ENCODE measurements at regions of chr12 and their contacts with region 1.

Region 1: DNA sequence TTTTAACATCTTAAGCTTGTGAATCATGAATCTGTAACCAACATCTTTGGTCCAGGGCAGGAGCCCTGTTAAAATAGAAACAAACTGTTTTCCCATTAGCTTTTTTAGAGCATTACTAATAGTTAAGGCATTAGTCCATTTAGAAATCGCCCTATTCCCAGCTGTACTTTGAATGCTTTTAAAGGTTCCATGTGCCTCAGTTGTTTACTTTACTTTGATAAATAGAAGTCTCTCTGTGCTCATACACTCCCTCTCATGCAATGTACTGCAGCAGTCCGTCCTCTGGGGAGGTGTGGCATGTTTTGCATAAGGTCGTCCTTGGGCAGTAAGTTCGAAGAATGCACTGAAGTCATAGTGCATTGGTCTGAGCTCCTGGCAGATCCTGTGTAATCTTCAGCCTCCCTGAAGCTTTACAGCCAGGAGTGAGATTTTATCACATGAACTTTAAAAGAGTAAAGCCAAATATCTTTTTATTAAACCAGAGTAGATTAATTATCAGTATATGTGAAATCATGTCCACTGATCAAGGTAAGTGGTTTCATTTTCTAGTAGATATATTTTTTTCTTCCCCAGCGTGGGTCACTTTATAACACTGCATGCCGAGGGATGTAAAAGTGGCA is 134.7 kb downstream of the FGD4 start:
- DNase-seq: peak; percentile 89
- H3K4me3 ChIP-seq: peak overlapping the region; percentile 39 to 73 (median 67)
- H3K27ac ChIP-seq: peak overlapping the region; percentile 67
- H3K4me1 ChIP-seq: peaks cover 30% of the 10 kb centered on the region
- H3K27me3 ChIP-seq: no peaks in the 10 kb centered on the region
- CTCF ChIP-seq: no peak
- POLR2A ChIP-seq: peak; percentile 75

Region 2: GRCh38 chr12:32482226-32482625 is 51.9 kb before region 1 on chr12:
- CTCF ChIA-PET with region 1: interaction called, 6 read pairs
- POLR2A ChIA-PET with region 1: no interaction called
- dilution Hi-C with region 1: loop called (anchors 10 kb)
- intact Hi-C with region 1: loop called (anchors 2 kb)
- DNase-seq: peak; percentile 71
- H3K4me3 ChIP-seq: no peak overlapping the region
- H3K27ac ChIP-seq: peak overlapping the region; percentile 47
- H3K4me1 ChIP-seq: peaks cover 53% of the 10 kb centered on the region
- H3K27me3 ChIP-seq: no peaks in the 10 kb centered on the region
- CTCF ChIP-seq: no peak
- POLR2A ChIP-seq: no peak

Region 3: DNA sequence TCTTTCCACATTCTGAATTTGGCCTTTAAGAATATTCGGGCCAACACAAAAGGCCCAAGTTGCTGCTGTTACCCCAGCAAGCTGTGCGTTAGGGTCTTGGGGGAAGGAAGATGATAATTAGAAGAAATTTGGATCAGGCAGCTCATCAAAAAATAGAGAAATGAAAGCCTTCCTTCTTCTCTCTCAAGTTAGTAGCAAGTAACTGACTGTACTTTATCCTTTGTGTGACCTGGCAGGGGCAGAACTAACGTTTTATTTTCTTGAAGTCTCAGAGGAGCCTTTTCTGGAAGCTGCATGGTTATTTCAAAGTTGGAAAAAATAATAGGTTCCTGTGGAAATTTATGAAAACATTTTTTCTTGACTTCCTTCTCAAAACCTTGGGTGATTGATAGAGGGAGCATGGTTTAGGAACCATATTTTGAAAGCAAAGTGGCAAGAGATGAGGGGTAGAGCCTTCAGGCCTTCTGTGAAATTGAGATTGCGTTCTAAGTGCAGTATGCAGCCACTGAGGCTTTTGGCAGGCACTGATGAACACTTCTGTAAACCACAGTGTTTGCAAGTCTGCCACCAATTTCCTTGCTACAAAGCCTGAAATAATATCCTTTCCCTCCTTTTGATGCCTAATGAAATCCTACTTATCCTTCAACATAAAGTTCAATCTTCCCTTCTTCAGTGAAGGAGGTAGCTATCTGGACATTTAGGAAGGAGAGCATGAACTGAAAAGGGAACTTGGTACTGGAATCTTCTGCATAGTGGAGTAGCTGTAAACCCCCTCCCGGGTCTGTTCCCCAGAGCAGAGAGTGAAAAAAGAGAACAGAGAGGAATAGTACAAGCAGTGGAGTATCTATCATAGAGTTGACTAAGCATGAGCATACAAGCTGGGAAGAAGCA is 11.5 kb before region 1 on chr12:
- CTCF ChIA-PET with region 1: interaction called, 3 read pairs
- POLR2A ChIA-PET with region 1: no interaction called
- dilution Hi-C with region 1: no loop called
- intact Hi-C with region 1: loop called (anchors 1 kb)
- DNase-seq: no peak
- H3K4me3 ChIP-seq: no peak overlapping the region
- H3K27ac ChIP-seq: peak overlapping the region; percentile 18
- H3K4me1 ChIP-seq: peaks cover 12% of the 10 kb centered on the region
- H3K27me3 ChIP-seq: no peaks in the 10 kb centered on the region
- CTCF ChIP-seq: no peak
- POLR2A ChIP-seq: no peak

Region 4: DNA sequence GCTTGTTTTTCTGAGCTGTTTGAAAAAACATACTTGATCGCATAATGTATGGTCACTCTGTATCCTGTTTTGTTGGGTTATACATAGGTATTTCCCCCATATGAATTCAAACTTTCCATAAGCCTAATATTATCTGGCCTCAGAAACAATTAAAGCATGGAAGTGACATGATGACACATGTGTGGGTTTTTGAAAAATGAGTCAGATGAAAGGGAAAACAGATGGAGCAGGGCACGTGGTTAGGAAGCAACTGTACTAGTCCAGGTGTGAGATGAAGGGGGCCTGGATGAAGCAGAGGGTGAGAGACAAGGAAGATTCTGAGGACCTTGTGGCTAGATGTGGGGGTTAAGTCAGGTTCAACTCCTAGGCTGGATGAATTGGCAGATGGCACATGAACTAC is 52.3 kb after region 1 on chr12:
- CTCF ChIA-PET with region 1: interaction called, 3 read pairs
- POLR2A ChIA-PET with region 1: no interaction called
- dilution Hi-C with region 1: no loop called
- intact Hi-C with region 1: loop called (anchors 2 kb)
- DNase-seq: peak; percentile 96
- H3K4me3 ChIP-seq: no peak overlapping the region
- H3K27ac ChIP-seq: peak overlapping the region; percentile 72
- H3K4me1 ChIP-seq: peaks cover 32% of the 10 kb centered on the region
- H3K27me3 ChIP-seq: no peaks in the 10 kb centered on the region
- CTCF ChIP-seq: no peak
- POLR2A ChIP-seq: peak; percentile 16

Measured in endothelial cell of umbilical vein (primary cell).